ENCODE measurements at regions of chr1 and their contacts with region 1.

Region 1: DNA sequence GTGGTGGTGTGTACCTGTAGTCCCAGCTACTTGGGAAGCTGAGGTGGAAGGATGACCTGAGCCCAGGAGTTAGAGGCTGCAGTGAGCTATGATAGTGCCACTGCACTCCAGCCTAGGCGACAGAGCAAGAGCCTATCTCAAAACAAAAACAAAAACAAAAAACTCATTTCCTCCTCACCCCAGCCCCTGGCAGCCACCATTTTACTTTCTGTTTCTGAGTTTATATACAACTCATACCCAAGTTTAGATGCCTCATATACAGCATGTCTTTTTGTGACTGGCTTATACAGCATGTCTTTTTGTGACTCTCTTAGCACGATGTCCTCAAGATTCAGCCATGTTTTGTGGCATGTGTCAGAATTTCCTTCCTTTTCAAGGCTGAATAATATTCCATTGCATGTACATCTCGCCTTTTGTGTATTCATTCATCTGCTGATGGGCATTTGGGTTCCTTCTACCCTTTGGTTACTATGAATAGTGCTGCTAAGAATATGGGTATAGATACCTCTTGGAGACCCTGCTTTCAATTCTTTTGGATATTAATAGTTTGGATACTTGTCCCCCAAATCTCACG is 14.7 kb downstream of the COA7 start:
- H3K4me3 Mint-ChIP-seq: no peak overlapping the region
- H3K27ac Mint-ChIP-seq: no peak overlapping the region
- H3K4me1 Mint-ChIP-seq: no peaks in the 10 kb centered on the region
- H3K27me3 Mint-ChIP-seq: no peaks in the 10 kb centered on the region

Region 2: GRCh38 chr1:52127181-52128180 is 556.0 kb before region 1 on chr1:
- intact Hi-C with region 1: loop called (anchors 5 kb)
- H3K4me3 Mint-ChIP-seq: no peak overlapping the region
- H3K27ac Mint-ChIP-seq: no peak overlapping the region
- H3K4me1 Mint-ChIP-seq: peaks cover 10% of the 10 kb centered on the region
- H3K27me3 Mint-ChIP-seq: peaks cover 44% of the 10 kb centered on the region

Region 3: GRCh38 chr1:52552505-52553361 is 130.7 kb before region 1 on chr1 and contains the start of gene TUT4:
- intact Hi-C with region 1: loop called (anchors 10 kb)
- H3K4me3 Mint-ChIP-seq: no peak within 1 kb of the TSS
- H3K27ac Mint-ChIP-seq: no peak within 1 kb of the TSS
- H3K4me1 Mint-ChIP-seq: peaks cover 5% of the 10 kb centered on the region
- H3K27me3 Mint-ChIP-seq: peaks cover 12% of the 10 kb centered on the region

Region 4: GRCh38 chr1:53238197-53239155 is 555.0 kb after region 1 on chr1 and contains the start of gene MAGOH:
- intact Hi-C with region 1: no loop called
- H3K4me3 Mint-ChIP-seq: peak within 1 kb of the TSS; percentile 99
- H3K27ac Mint-ChIP-seq: peak within 1 kb of the TSS; percentile 98
- H3K4me1 Mint-ChIP-seq: peaks cover 30% of the 10 kb centered on the region
- H3K27me3 Mint-ChIP-seq: no peaks in the 10 kb centered on the region

Measured in dendritic cell treated with granulocyte-macrophage colony-stimulating factor and Interleukin-4, amounts not matched to agents 40 ng/mL and 50 ng/mL, for 4 days (primary cell).